IMR-90 (cell line): ENCODE measurements at regions of chr2 and their contacts with region 1.

Region 1: DNA sequence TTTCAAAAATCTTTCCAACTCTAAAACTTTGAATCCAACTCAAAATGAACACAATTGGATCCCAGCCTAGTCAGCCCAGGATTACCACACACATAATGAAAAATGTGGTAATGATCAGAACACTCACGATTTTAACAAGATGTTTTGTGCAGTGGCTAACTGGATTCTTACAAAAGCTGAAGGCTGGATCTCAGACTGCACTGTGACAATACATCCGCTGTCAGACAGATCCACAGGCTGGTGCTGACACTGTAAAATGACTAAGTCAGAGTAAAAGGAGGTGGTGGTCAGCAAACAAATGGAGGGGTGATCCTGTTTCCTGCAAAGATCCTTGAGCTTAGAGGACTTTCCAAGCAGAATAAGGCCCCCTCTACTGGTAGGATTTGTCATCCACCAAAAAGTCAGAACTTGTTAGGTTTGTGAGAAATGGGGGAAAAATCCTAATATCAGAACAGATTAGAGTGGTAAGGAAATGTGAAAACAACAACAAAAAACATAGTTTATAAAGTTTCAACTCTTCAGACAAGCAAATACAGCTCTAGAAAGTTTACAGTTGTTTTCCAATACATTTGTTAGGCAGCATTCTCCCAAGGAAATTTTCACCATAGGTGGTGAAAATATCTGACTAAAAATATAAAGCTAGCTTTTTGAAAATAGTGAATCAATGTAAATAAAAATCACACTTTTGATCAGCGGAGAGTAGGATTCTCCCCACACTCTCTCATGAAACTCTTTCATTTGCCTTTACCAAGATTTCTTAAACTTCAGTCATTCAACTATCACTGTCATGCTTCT is 211.9 kb downstream of the AGPS start:
- DNase-seq: peak; percentile 71
- ATAC-seq: peak; percentile 91
- H3K4me3 ChIP-seq: no peak overlapping the region
- H3K27ac ChIP-seq: no peak overlapping the region; the same call in 1 of the 2 replicates
- H3K4me1 ChIP-seq: peaks cover 2% of the 10 kb centered on the region
- H3K27me3 ChIP-seq: peaks cover 4% of the 10 kb centered on the region; the same call in 1 of the 2 replicates
- CTCF ChIP-seq: peak; percentile 72
- POLR2A ChIP-seq: no peak
- RAD21 ChIP-seq: peak; percentile 63

Region 2: DNA sequence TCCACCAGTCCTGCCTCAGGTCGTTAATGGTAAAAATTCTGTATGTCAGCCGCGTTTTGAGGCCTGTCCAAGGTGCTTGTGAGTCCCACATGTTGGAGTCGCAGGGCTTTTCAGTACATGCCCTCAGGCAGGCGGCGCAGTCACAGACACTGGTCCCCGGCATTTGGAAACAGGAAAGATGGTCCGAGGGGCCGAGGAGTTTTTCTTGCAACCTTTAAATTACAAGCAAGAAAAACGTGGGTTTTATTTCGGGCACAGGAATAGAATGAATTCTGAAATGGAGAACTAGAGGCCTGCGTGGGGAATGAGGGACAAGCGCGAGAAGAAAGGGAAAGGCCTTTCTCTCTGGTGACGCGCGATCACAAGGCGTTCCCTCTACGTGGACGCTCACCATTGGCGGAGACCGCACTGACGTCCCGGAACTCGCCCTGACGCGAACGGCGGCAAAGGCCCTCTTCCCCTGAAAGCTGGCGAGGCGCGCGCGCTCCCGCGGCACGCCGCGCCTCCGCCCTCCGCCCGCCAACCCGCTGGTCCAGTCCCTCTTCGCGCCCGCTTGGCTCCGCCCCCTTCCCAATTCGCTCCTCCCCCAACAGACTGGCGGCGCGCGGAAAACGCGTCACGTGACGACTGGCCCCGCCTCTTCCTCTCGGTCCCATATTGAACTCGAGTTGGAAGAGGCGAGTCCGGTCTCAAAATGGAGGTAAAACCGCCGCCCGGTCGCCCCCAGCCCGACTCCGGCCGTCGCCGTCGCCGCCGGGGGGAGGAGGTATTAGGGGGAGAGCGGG is 392.2 kb before region 1 on chr2 and contains the start of gene HNRNPA3:
- CTCF ChIA-PET with region 1: no interaction called
- POLR2A ChIA-PET with region 1: no interaction called
- dilution Hi-C with region 1: no loop called
- in situ Hi-C with region 1: no loop called
- intact Hi-C with region 1: no loop called
- DNase-seq: peak; percentile 99
- ATAC-seq: peak; percentile 92
- H3K4me3 ChIP-seq: peak within 1 kb of the TSS; percentile 74
- H3K27ac ChIP-seq: peak within 1 kb of the TSS; percentile 94
- H3K4me1 ChIP-seq: no peaks in the 10 kb centered on the region; the same call in none of the 2 replicates
- H3K27me3 ChIP-seq: no peaks in the 10 kb centered on the region
- CTCF ChIP-seq: no peak
- POLR2A ChIP-seq: peak; percentile 95
- RAD21 ChIP-seq: no peak
- total RNA-seq, gene HNRNPA3: 18.6 and 35.6 TPM in 2 replicates

Region 3: DNA sequence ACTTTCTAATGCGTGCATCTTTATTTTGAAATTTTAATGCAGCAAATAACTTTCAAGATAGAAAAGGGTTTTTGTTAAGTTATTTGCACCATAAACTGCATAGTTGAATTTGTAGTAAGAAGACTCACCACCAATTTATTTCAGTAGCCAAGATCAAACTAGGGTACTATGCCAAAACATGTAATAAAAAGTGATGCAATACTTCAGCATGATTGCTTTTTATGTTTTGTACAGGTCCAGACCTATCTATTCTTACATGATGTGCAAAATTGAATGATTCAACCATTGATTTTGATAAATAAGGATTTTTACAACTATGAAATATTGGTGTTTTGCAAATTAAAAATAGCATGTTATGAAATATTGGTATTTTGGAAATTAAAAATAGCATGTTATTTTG is 185.2 kb before region 1 on chr2:
- CTCF ChIA-PET with region 1: no interaction called
- POLR2A ChIA-PET with region 1: no interaction called
- dilution Hi-C with region 1: no loop called
- in situ Hi-C with region 1: no loop called
- intact Hi-C with region 1: loop called (anchors 5 kb)
- DNase-seq: peak; percentile 61
- ATAC-seq: no peak
- H3K4me3 ChIP-seq: no peak overlapping the region
- H3K27ac ChIP-seq: no peak overlapping the region
- H3K4me1 ChIP-seq: no peaks in the 10 kb centered on the region
- H3K27me3 ChIP-seq: no peaks in the 10 kb centered on the region
- CTCF ChIP-seq: no peak
- POLR2A ChIP-seq: no peak
- RAD21 ChIP-seq: no peak

Region 4: GRCh38 chr2:177489719-177490301 is 114.7 kb before region 1 on chr2:
- CTCF ChIA-PET with region 1: interaction called, 4 read pairs
- POLR2A ChIA-PET with region 1: no interaction called
- dilution Hi-C with region 1: no loop called
- in situ Hi-C with region 1: loop called (anchors 10 kb)
- intact Hi-C with region 1: loop called (anchors 1 kb)
- DNase-seq: peak; percentile 49
- ATAC-seq: peak; percentile 72
- H3K4me3 ChIP-seq: no peak overlapping the region
- H3K27ac ChIP-seq: no peak overlapping the region
- H3K4me1 ChIP-seq: no peaks in the 10 kb centered on the region
- H3K27me3 ChIP-seq: no peaks in the 10 kb centered on the region
- CTCF ChIP-seq: peak; percentile 67
- POLR2A ChIP-seq: no peak
- RAD21 ChIP-seq: peak; percentile 63

Region 5: DNA sequence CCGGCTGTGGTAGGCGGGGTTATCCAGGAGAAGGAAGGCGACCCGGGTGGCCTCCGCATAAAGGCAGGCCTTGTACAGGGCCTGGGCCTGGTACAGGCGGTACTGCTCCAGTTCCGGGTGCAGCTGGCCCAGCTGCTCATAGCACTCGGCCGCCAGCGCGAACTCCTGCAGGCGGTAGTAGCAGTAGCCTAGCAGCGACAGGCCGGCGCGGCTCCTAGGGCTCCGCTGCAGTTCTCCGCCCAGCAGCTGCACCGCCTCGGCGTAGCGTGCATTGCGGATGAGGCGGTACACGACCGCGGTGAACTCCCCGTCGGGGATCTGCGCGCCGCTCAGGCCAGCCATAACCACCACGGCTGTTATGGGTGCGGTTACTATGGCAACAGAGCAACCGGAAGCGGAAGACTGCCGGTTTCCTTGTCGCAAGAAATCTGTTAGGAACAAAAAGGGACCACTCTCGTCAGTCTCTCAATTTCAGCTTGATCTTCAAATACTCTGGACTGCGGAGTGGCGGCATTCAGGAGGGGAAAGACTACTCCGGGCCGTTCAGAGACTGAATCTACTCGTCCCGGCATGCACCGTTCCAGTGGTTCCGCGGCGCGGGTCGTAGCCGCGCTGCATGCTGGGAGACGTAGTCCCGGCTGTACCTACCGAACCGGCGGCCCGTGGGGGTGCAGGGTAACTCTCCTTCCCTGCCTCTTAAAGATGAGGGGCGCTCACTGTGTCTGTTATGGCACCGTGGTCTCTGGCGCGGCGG is 51.9 kb before region 1 on chr2:
- CTCF ChIA-PET with region 1: no interaction called
- POLR2A ChIA-PET with region 1: no interaction called
- dilution Hi-C with region 1: no loop called
- in situ Hi-C with region 1: no loop called
- intact Hi-C with region 1: loop called (anchors 2 kb)
- DNase-seq: peak; percentile 88
- ATAC-seq: peak; percentile 97
- H3K4me3 ChIP-seq: peak overlapping the region; percentile 59
- H3K27ac ChIP-seq: peak overlapping the region; percentile 87
- H3K4me1 ChIP-seq: no peaks in the 10 kb centered on the region
- H3K27me3 ChIP-seq: no peaks in the 10 kb centered on the region
- CTCF ChIP-seq: no peak
- POLR2A ChIP-seq: no peak; the same call in 1 of the 2 replicates
- RAD21 ChIP-seq: no peak

Region 6: GRCh38 chr2:177618255-177619253 is 14.1 kb after region 1 on chr2:
- CTCF ChIA-PET with region 1: interaction called, 11 read pairs
- POLR2A ChIA-PET with region 1: no interaction called
- dilution Hi-C with region 1: no loop called
- in situ Hi-C with region 1: no loop called
- intact Hi-C with region 1: no loop called
- DNase-seq: peak; percentile 80
- ATAC-seq: peak; percentile 99
- H3K4me3 ChIP-seq: peak overlapping the region; percentile 92
- H3K27ac ChIP-seq: peak overlapping the region; percentile 100
- H3K4me1 ChIP-seq: no peaks in the 10 kb centered on the region; the same call in 1 of the 2 replicates
- H3K27me3 ChIP-seq: no peaks in the 10 kb centered on the region; the same call in 1 of the 2 replicates
- CTCF ChIP-seq: no peak
- POLR2A ChIP-seq: 0 out of 2 replicates have a peak, but pooled peaks have one; percentile 32
- RAD21 ChIP-seq: no peak

Region 7: GRCh38 chr2:177724398-177725287 is 120.2 kb after region 1 on chr2:
- CTCF ChIA-PET with region 1: no interaction called
- POLR2A ChIA-PET with region 1: no interaction called
- dilution Hi-C with region 1: no loop called
- in situ Hi-C with region 1: no loop called
- intact Hi-C with region 1: loop called (anchors 5 kb)
- DNase-seq: peak; percentile 42
- ATAC-seq: peak; percentile 85
- H3K4me3 ChIP-seq: no peak overlapping the region
- H3K27ac ChIP-seq: no peak overlapping the region
- H3K4me1 ChIP-seq: no peaks in the 10 kb centered on the region
- H3K27me3 ChIP-seq: peaks cover 8% of the 10 kb centered on the region
- CTCF ChIP-seq: peak; percentile 82
- POLR2A ChIP-seq: no peak
- RAD21 ChIP-seq: peak; percentile 87

Region 8: GRCh38 chr2:177763532-177764265 is 159.2 kb after region 1 on chr2:
- CTCF ChIA-PET with region 1: no interaction called
- POLR2A ChIA-PET with region 1: no interaction called
- dilution Hi-C with region 1: no loop called
- in situ Hi-C with region 1: no loop called
- intact Hi-C with region 1: no loop called
- DNase-seq: peak; percentile 58
- ATAC-seq: peak; percentile 98
- H3K4me3 ChIP-seq: no peak overlapping the region
- H3K27ac ChIP-seq: no peak overlapping the region
- H3K4me1 ChIP-seq: no peaks in the 10 kb centered on the region
- H3K27me3 ChIP-seq: peaks cover 4% of the 10 kb centered on the region; the same call in 1 of the 2 replicates
- CTCF ChIP-seq: peak; percentile 71
- POLR2A ChIP-seq: no peak
- RAD21 ChIP-seq: peak; percentile 55

Region 9: DNA sequence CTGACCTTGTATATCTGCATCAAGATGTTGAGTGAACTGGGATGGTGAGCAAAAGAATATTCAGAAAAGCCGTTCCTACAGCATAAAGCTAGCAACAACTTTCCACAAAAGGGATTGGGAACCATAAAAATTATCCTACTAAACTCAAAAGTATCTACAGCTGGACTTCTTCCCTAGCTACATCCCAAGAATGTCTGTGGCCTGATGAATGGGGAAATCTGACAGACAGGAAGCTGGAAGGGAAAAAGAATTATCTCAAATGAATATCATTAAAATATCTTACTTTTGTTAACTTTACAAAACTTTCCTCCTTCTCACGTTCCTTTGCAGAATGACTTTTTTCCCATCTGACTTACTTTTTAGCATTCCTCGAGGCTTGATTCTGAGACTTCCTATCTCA is 317.3 kb after region 1 on chr2:
- CTCF ChIA-PET with region 1: no interaction called
- POLR2A ChIA-PET with region 1: no interaction called
- dilution Hi-C with region 1: no loop called
- in situ Hi-C with region 1: no loop called
- intact Hi-C with region 1: no loop called
- DNase-seq: no peak
- ATAC-seq: no peak
- H3K4me3 ChIP-seq: no peak overlapping the region
- H3K27ac ChIP-seq: no peak overlapping the region
- H3K4me1 ChIP-seq: no peaks in the 10 kb centered on the region
- H3K27me3 ChIP-seq: no peaks in the 10 kb centered on the region
- CTCF ChIP-seq: no peak
- POLR2A ChIP-seq: no peak
- RAD21 ChIP-seq: no peak